ENCODE measurements at regions of chr19 and their contacts with region 1.

Region 1: DNA sequence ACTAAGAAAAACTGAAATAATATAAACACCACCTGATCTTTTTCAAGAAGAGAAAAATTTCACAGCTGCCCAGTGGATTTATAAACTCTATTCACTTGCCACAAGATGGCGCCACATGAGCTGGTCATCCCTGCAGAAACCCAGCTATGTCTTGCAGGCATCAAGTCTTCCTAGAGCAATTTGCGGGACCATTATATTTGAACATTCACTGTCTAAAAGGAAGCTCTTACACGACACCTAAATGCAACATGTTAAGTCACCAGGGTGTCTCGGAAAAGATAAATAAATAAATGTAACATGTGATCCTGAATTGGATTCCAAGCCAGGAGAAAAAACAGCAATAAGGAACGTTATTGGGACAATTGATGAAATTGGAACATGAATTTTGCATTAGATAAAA is 20.3 kb upstream of the AKT2 start:
- DNase-seq: peak; percentile 78 to 90 (median 84)
- H3K4me3 ChIP-seq: no peak overlapping the region
- H3K27ac ChIP-seq: no peak overlapping the region
- H3K4me1 ChIP-seq: no peaks in the 10 kb centered on the region
- H3K27me3 ChIP-seq: no peaks in the 10 kb centered on the region
- CTCF ChIP-seq: peak; percentile 68 to 84 (median 74)
- POLR2A ChIP-seq: no peak

Region 2: GRCh38 chr19:40378509-40378908 is 73.1 kb after region 1 on chr19:
- intact Hi-C with region 1: loop called in 1 of 2 experiments (anchors 10 kb)
- DNase-seq: peak in 1 of 7 donors; percentile 19
- H3K4me3 ChIP-seq: no peak overlapping the region
- H3K27ac ChIP-seq: no peak overlapping the region
- H3K4me1 ChIP-seq: no peaks in the 10 kb centered on the region
- H3K27me3 ChIP-seq: no peaks in the 10 kb centered on the region
- CTCF ChIP-seq: no peak
- POLR2A ChIP-seq: no peak

Measured in adrenal gland (tissue), 19 donors.